HEK293 (cell line): ENCODE measurements at regions of chr3 and their contacts with region 1.

Region 1: GRCh38 chr3:149808209-149808829 is 4.7 kb upstream of the RNF13 start:
- H3K4me3 ChIP-seq: no peak overlapping the region
- H3K27ac ChIP-seq: no peak overlapping the region
- H3K4me1 ChIP-seq: no peaks in the 10 kb centered on the region
- CTCF ChIP-seq: peak; percentile 20; the same call in 1 of the 2 replicates

Region 2: DNA sequence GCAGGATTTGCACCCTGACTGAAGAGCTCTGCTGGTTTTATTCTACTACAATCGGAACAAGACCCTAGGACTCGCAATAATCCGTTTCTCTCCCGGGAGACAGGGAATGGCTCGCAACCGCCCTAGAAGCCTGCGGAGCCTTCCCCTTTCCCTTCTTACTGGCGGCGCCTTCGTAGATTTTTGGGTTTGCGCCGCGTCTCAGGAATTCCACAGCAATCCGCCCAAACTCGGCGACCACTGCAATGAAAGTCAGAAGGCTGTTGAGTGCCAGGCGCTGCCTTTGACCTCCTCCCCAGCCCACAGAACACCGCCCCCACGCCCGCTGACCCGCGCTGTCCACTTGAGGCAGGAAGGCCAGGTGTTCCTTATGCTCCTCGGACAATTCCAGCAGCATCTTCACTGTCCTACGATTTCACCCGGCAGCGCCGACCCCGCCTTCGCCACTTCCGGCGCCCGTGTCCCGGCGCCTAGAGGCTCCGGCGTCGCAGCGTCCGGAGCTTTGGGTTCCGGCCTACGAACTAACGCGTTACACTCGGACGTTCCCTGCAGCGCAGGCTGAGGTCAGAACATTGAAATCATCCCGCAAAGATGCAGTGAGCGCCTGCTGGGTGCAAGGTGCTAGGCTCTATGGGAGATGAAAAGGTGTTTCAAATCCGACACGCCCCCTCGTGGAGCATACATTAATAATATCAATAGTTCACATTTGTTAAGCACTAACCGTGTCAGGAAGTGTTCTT is 56.1 kb before region 1 on chr3 and contains the start of gene COMMD2:
- CTCF ChIA-PET with region 1: interaction called, 20 read pairs
- POLR2A ChIA-PET with region 1: interaction called, 3 read pairs
- H3K4me3 ChIP-seq: peak within 1 kb of the TSS; percentile 100
- H3K27ac ChIP-seq: no peak within 1 kb of the TSS
- H3K4me1 ChIP-seq: no peaks in the 10 kb centered on the region
- CTCF ChIP-seq: no peak; the same call in 1 of the 2 replicates

Region 3: DNA sequence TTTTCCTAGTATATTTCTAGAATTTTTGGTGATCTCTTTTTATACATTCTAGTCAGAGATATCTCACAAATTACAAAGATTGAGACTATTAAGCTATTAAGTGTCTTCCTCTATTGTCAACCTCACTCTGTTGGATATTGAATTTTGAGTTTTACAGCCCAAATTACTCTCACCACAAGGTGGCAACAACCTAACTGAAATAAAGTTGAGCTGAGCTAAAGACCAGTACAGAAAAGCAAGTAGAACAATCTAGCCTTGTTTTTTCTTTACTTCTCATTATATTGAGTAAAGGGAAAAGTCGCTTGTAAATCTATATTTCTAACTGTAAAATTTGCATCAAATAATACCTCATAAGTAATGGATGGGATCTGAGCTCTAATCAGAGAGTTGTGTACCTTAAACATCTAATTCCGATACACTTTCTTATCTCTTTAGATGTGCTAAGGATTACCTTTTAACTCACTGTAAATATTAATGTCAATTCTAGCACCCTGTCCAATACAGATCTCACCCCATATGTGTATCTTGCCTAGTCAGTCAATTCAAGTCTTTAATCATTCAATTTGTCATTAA is 42.5 kb before region 1 on chr3:
- CTCF ChIA-PET with region 1: interaction called, 71 read pairs
- POLR2A ChIA-PET with region 1: no interaction called
- H3K4me3 ChIP-seq: no peak overlapping the region
- H3K27ac ChIP-seq: no peak overlapping the region
- H3K4me1 ChIP-seq: no peaks in the 10 kb centered on the region
- CTCF ChIP-seq: no peak

Region 4: GRCh38 chr3:149771652-149772271 is 36.6 kb before region 1 on chr3:
- CTCF ChIA-PET with region 1: interaction called, 71 read pairs
- POLR2A ChIA-PET with region 1: interaction called, 4 read pairs
- H3K4me3 ChIP-seq: no peak overlapping the region
- H3K27ac ChIP-seq: no peak overlapping the region
- H3K4me1 ChIP-seq: no peaks in the 10 kb centered on the region
- CTCF ChIP-seq: no peak

Region 5: GRCh38 chr3:149796026-149796425 is 12.3 kb before region 1 on chr3:
- CTCF ChIA-PET with region 1: interaction called, 17 read pairs
- POLR2A ChIA-PET with region 1: interaction called, 3 read pairs
- H3K4me3 ChIP-seq: no peak overlapping the region
- H3K27ac ChIP-seq: no peak overlapping the region
- H3K4me1 ChIP-seq: no peaks in the 10 kb centered on the region
- CTCF ChIP-seq: no peak

Region 6: GRCh38 chr3:149820180-149820579 is 11.9 kb after region 1 on chr3:
- CTCF ChIA-PET with region 1: interaction called, 25 read pairs
- POLR2A ChIA-PET with region 1: no interaction called
- H3K4me3 ChIP-seq: no peak overlapping the region
- H3K27ac ChIP-seq: no peak overlapping the region
- H3K4me1 ChIP-seq: no peaks in the 10 kb centered on the region; the same call in none of the 2 replicates
- CTCF ChIP-seq: no peak

Region 7: GRCh38 chr3:149879872-149880271 is 71.6 kb after region 1 on chr3:
- CTCF ChIA-PET with region 1: interaction called, 11 read pairs
- POLR2A ChIA-PET with region 1: no interaction called
- H3K4me3 ChIP-seq: no peak overlapping the region
- H3K27ac ChIP-seq: no peak overlapping the region
- H3K4me1 ChIP-seq: no peaks in the 10 kb centered on the region
- CTCF ChIP-seq: no peak